ENCODE measurements at regions of chr10 and their contacts with region 1.

Region 1: DNA sequence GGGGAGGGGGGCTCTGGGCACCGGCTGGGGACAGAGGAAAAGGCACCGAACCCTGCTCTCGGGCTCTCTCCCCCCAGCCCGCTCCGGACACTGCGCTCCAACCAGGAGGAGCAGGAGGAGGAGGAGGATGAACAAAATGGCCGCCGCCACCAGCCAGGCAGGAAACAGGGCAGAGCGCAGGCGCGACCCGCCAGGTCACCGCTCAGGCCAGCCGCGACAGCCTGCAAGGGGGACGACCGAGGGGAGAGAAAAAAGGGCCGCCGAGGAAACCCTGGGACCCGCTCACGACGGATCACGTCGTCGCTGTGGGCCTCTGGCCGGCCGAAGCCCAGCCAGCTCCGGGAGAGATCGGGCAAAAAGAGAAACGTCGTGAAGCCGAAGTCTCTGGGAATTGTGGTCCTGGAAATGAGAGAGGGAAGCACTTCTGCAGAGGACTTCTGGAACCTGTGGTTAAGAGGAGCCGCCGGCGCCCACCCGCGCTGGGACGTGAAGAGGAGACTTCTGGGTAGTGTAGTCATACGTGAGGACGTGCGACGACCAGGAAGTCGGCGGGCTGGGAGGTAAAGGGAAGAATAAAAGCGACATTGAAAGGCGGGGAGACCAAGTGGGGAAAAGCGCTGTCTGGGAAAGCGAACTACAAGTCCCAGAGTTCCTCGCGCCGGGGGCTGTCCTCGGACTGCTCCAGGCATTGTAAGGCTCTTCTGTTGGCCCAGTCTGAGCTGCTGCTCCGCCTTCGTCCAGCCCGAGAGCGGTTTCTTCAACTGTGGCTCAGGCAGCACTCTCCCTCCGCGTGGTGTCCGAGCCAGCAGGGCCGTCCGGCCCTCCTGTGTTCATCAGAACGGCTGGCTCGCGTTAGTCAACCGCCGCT is at the start of gene TIAL1:
- DNase-seq: peak; percentile 84 to 98 (median 92)
- ATAC-seq: peak; percentile 83
- H3K4me3 ChIP-seq: peak within 1 kb of the TSS; percentile 98 to 99
- H3K4me3 Mint-ChIP-seq: peak within 1 kb of the TSS; percentile 99
- H3K27ac ChIP-seq: peak within 1 kb of the TSS; percentile 79 to 96
- H3K27ac Mint-ChIP-seq: peak within 1 kb of the TSS; percentile 96
- H3K4me1 ChIP-seq: peaks cover 43% of the 10 kb centered on the region
- H3K4me1 Mint-ChIP-seq: peaks cover 48% of the 10 kb centered on the region
- H3K27me3 ChIP-seq: no peaks in the 10 kb centered on the region
- H3K27me3 Mint-ChIP-seq: no peaks in the 10 kb centered on the region
- CTCF ChIP-seq: no peak
- total RNA-seq, gene TIAL1: 159 to 172 TPM

Region 2: GRCh38 chr10:118754720-118755480 is 841.9 kb before region 1 on chr10 and contains the start of gene CACUL1:
- CTCF ChIA-PET with region 1: no interaction called
- POLR2A ChIA-PET with region 1: no interaction called
- intact Hi-C with region 1: loop called (anchors 2 kb)
- DNase-seq: peak; percentile 99 to 100 (median 100)
- ATAC-seq: peak; percentile 97
- H3K4me3 ChIP-seq: peak within 1 kb of the TSS; percentile 86 to 92
- H3K4me3 Mint-ChIP-seq: peak within 1 kb of the TSS; percentile 93
- H3K27ac ChIP-seq: peak within 1 kb of the TSS; percentile 79 to 83
- H3K27ac Mint-ChIP-seq: peak within 1 kb of the TSS; percentile 92
- H3K4me1 ChIP-seq: peaks cover 29% of the 10 kb centered on the region
- H3K4me1 Mint-ChIP-seq: peaks cover 36% of the 10 kb centered on the region
- H3K27me3 ChIP-seq: peaks cover 0 to 2% of the 10 kb centered on the region in 2 experiments
- H3K27me3 Mint-ChIP-seq: no peaks in the 10 kb centered on the region
- CTCF ChIP-seq: no peak
- total RNA-seq, gene CACUL1: 40.8 to 46.8 TPM

Region 3: GRCh38 chr10:119178372-119179119 is 418.2 kb before region 1 on chr10 and contains the start of gene PRDX3:
- CTCF ChIA-PET with region 1: no interaction called
- POLR2A ChIA-PET with region 1: no interaction called
- intact Hi-C with region 1: loop called (anchors 2 to 10 kb)
- DNase-seq: peak; percentile 85 to 94 (median 93)
- ATAC-seq: peak; percentile 99
- H3K4me3 ChIP-seq: peak within 1 kb of the TSS; percentile 85 to 93
- H3K4me3 Mint-ChIP-seq: peak within 1 kb of the TSS; percentile 89
- H3K27ac ChIP-seq: peak within 1 kb of the TSS; percentile 73 to 75
- H3K27ac Mint-ChIP-seq: peak within 1 kb of the TSS; percentile 95
- H3K4me1 ChIP-seq: peaks cover 20% of the 10 kb centered on the region
- H3K4me1 Mint-ChIP-seq: peaks cover 35% of the 10 kb centered on the region
- H3K27me3 ChIP-seq: no peaks in the 10 kb centered on the region
- H3K27me3 Mint-ChIP-seq: no peaks in the 10 kb centered on the region
- CTCF ChIP-seq: no peak
- total RNA-seq, gene PRDX3: 7.6 to 11.7 TPM

Region 4: GRCh38 chr10:119517235-119518141 is 79.3 kb before region 1 on chr10:
- CTCF ChIA-PET with region 1: no interaction called
- POLR2A ChIA-PET with region 1: interaction called, 3 read pairs
- intact Hi-C with region 1: loop called in 1 of 2 experiments (anchors 2 kb)
- DNase-seq: peak in 6 of 9 experiments; percentile 57 to 74 (median 64)
- ATAC-seq: peak; percentile 24
- H3K4me3 ChIP-seq: peak overlapping the region; percentile 2 to 11
- H3K4me3 Mint-ChIP-seq: peak overlapping the region; percentile 76
- H3K27ac ChIP-seq: peak overlapping the region; percentile 25 to 83
- H3K27ac Mint-ChIP-seq: peak overlapping the region; percentile 93
- H3K4me1 ChIP-seq: peaks cover 70% of the 10 kb centered on the region
- H3K4me1 Mint-ChIP-seq: peaks cover 73% of the 10 kb centered on the region
- H3K27me3 ChIP-seq: no peaks in the 10 kb centered on the region
- H3K27me3 Mint-ChIP-seq: no peaks in the 10 kb centered on the region
- CTCF ChIP-seq: no peak

Region 5: DNA sequence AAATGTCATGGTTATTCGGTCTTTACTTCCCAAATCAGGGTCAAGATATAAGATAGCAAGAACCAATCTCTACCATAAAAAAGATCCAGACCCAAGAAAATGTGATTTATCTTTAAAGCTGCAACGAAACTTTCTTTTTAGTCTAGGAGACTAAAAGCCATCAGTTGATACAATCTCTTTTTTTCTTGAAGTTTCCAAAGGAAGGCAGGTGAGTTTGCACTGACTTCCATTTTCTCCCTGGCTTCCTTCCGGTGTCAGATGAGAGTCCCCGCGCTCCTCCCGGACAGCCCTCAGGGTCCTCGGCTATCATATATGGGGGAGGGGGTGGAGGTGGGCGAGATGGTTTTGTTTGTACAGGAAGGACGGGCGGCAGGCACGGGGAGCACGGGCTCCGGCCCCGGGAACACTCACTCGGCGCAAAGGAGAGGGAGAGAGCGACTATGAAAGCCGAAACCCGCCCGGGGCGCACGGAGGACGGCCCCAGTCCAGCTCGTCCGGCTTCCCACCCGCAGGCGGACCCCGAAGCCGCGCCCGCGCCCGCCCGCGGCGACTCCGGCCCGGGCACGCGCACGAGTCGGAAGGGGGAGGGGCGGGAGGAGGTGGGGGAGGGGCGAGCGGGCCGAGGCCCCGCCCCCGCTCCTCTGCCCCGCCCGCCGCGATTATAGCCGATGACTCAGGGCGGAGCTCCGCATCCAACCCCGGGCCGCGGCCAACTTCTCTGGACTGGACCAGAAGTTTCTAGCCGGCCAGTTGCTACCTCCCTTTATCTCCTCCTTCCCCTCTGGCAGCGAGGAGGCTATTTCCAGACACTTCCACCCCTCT is 54.1 kb after region 1 on chr10 and contains the start of gene BAG3:
- CTCF ChIA-PET with region 1: interaction called, 3 read pairs
- POLR2A ChIA-PET with region 1: interaction called, 3 read pairs
- intact Hi-C with region 1: loop called (anchors 1 kb)
- DNase-seq: peak; percentile 57 to 88 (median 76)
- ATAC-seq: peak; percentile 76
- H3K4me3 ChIP-seq: peak within 1 kb of the TSS; percentile 94 to 95
- H3K4me3 Mint-ChIP-seq: peak within 1 kb of the TSS; percentile 98
- H3K27ac ChIP-seq: peak within 1 kb of the TSS; percentile 78 to 88
- H3K27ac Mint-ChIP-seq: peak within 1 kb of the TSS; percentile 95
- H3K4me1 ChIP-seq: peaks cover 36% of the 10 kb centered on the region
- H3K4me1 Mint-ChIP-seq: peaks cover 44% of the 10 kb centered on the region
- H3K27me3 ChIP-seq: no peaks in the 10 kb centered on the region
- H3K27me3 Mint-ChIP-seq: no peaks in the 10 kb centered on the region
- CTCF ChIP-seq: no peak
- total RNA-seq, gene BAG3: 20.6 to 21.8 TPM

Region 6: GRCh38 chr10:119872860-119873681 is 276.3 kb after region 1 on chr10:
- CTCF ChIA-PET with region 1: no interaction called
- POLR2A ChIA-PET with region 1: no interaction called
- intact Hi-C with region 1: loop called (anchors 1 to 2 kb)
- DNase-seq: peak; percentile 79 to 95 (median 87)
- ATAC-seq: peak; percentile 90
- H3K4me3 ChIP-seq: peak overlapping the region; percentile 68 to 96
- H3K4me3 Mint-ChIP-seq: peak overlapping the region; percentile 88
- H3K27ac ChIP-seq: peak overlapping the region; percentile 81 to 86
- H3K27ac Mint-ChIP-seq: peak overlapping the region; percentile 87
- H3K4me1 ChIP-seq: peaks cover 22% of the 10 kb centered on the region
- H3K4me1 Mint-ChIP-seq: peaks cover 39% of the 10 kb centered on the region
- H3K27me3 ChIP-seq: no peaks in the 10 kb centered on the region
- H3K27me3 Mint-ChIP-seq: no peaks in the 10 kb centered on the region
- CTCF ChIP-seq: no peak

Measured in CD8-positive, alpha-beta T cell (primary cell).